ENCODE measurements at regions of chr12 and their contacts with region 1.

Region 1: GRCh38 chr12:9797722-9798619 is 29.3 kb upstream of the KLRF1 start:
- DNase-seq: peak; percentile 73
- H3K4me3 Mint-ChIP-seq: peak overlapping the region; percentile 46
- H3K27ac Mint-ChIP-seq: peak overlapping the region; percentile 41
- H3K4me1 Mint-ChIP-seq: peaks cover 49% of the 10 kb centered on the region
- H3K27me3 Mint-ChIP-seq: peaks cover 5% of the 10 kb centered on the region

Region 2: GRCh38 chr12:9340422-9341259 is 457.3 kb before region 1 on chr12:
- intact Hi-C with region 1: no loop called
- DNase-seq: no peak
- H3K4me3 Mint-ChIP-seq: no peak overlapping the region
- H3K27ac Mint-ChIP-seq: peak overlapping the region; percentile 42
- H3K4me1 Mint-ChIP-seq: peaks cover 11% of the 10 kb centered on the region
- H3K27me3 Mint-ChIP-seq: peaks cover 7% of the 10 kb centered on the region

Region 3: DNA sequence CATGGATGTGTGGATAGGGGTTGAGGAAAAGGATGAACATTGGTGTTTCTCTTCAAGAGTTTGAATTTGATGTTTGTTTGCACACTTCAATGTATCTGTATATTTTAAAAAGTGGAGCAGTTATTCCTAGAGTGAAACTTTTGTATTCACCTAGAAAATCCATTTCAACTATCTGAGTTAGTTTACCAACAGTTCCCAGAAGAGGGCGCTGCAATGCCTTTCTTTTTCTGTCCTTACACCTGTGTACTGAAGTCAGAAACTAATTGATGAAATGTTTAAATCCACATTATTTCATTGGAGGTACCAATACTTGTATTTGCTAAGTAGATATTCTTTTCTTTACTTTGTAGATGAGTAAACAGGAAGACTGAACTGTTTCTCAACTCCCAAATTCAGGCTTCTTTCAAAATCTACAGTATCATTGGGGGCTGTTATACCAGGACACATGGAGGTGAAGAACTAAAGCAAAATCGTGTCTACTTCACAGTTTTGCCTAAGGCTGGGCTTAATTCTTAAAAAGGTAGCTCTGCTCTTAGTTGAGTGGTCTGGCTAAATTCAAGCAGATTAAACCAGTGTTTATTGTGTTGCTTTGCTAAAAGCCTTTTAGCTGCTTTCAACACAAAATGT is 163.7 kb before region 1 on chr12:
- intact Hi-C with region 1: loop called (anchors 2 kb)
- DNase-seq: peak; percentile 64
- H3K4me3 Mint-ChIP-seq: peak overlapping the region; percentile 60
- H3K27ac Mint-ChIP-seq: peak overlapping the region; percentile 63
- H3K4me1 Mint-ChIP-seq: peaks cover 60% of the 10 kb centered on the region
- H3K27me3 Mint-ChIP-seq: peaks cover 3% of the 10 kb centered on the region

Region 4: GRCh38 chr12:9721394-9722092 is 76.4 kb before region 1 on chr12:
- intact Hi-C with region 1: no loop called
- DNase-seq: no peak
- H3K4me3 Mint-ChIP-seq: no peak overlapping the region
- H3K27ac Mint-ChIP-seq: no peak overlapping the region
- H3K4me1 Mint-ChIP-seq: peaks cover 61% of the 10 kb centered on the region
- H3K27me3 Mint-ChIP-seq: peaks cover 4% of the 10 kb centered on the region

Region 5: DNA sequence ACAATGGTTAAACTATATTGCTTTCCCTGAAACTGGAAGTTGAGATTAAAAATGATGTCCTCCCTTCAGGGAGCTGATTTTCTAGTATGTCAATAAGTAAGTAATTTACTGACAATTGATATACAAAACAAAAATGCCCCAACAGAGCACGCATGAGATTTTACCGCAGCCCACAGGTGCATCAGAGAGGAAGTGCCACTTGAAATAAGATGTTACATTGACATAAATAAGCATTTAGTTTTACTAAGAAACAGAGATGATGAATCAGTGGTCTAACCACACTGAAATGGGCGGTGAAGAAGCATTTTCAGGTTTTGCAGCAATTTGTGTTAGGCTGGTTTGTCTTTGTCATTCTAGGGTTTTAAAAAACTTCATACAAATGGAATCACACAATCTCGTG is 56.2 kb before region 1 on chr12:
- intact Hi-C with region 1: loop called (anchors 1 kb)
- DNase-seq: peak; percentile 81
- H3K4me3 Mint-ChIP-seq: peak overlapping the region; percentile 70
- H3K27ac Mint-ChIP-seq: peak overlapping the region; percentile 86
- H3K4me1 Mint-ChIP-seq: peaks cover 72% of the 10 kb centered on the region
- H3K27me3 Mint-ChIP-seq: no peaks in the 10 kb centered on the region

Region 6: DNA sequence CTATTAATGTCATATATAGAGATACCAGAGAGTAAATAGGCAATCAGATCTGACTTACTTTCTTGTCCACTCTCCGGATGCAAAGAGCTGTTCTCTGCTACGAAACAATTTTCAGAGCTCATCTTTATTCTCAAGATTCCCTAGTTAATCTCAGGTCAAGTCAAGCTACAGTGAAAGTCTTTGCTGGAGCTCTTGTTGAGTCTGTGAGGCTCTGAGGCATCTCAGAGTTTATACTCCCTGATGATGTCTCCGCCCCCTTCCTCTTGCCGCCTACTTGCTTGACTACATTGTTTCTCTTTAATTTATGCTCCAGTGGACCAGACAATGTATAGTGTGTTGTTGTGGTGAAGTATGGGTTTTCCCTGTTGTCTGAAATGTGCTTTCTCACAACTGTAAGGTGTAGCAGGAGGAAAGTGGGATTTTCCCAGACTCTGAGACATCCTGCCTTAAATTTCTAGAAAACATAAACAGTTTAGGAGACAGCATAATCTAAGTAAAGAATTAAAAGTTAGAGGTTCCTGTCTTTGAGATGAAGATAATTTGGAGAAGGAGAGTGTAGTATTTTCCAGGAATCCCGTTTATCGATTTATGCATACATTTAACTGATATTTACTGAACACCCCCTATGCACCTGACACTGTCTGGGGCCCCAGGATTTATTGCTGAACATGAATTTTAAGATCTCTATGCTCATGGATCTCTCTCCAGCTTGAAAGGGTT is 37.1 kb before region 1 on chr12 and contains the start of gene CD69:
- intact Hi-C with region 1: loop called (anchors 1 kb)
- DNase-seq: peak; percentile 81
- H3K4me3 Mint-ChIP-seq: peak within 1 kb of the TSS; percentile 98
- H3K27ac Mint-ChIP-seq: peak within 1 kb of the TSS; percentile 97
- H3K4me1 Mint-ChIP-seq: peaks cover 68% of the 10 kb centered on the region
- H3K27me3 Mint-ChIP-seq: peaks cover 6% of the 10 kb centered on the region
- total RNA-seq, gene CD69: 90.5 and 93.2 TPM in 2 replicates

Region 7: GRCh38 chr12:9848899-9849298 is 50.9 kb after region 1 on chr12:
- intact Hi-C with region 1: loop called (anchors 5 kb)
- DNase-seq: no peak
- H3K4me3 Mint-ChIP-seq: no peak overlapping the region
- H3K27ac Mint-ChIP-seq: no peak overlapping the region
- H3K4me1 Mint-ChIP-seq: peaks cover 10% of the 10 kb centered on the region
- H3K27me3 Mint-ChIP-seq: peaks cover 19% of the 10 kb centered on the region

Region 8: DNA sequence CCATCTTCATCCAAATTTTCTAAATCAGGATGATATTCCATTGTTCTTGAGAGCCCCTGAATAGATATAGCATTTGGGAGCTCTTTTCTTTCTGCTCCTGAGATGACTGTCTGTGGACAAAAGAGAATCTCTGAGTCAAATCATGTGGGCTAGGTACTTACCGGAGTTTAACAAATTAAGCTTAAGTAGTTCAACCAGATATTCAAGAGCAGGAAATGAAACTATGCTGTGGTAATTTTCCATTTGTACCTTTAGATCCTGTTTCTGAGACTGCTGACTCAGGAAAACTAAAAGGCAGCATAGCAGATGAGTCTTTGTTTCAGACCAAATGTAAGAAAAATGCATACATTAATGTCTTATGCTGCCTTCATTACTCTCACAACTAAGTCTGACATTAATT is 332.1 kb after region 1 on chr12 and contains the start of gene CLEC7A:
- intact Hi-C with region 1: loop called (anchors 5 kb)
- DNase-seq: no peak
- H3K4me3 Mint-ChIP-seq: no peak within 1 kb of the TSS
- H3K27ac Mint-ChIP-seq: no peak within 1 kb of the TSS
- H3K4me1 Mint-ChIP-seq: peaks cover 16% of the 10 kb centered on the region
- H3K27me3 Mint-ChIP-seq: peaks cover 37% of the 10 kb centered on the region
- total RNA-seq, gene CLEC7A: 0.17 TPM in 1 of 2 replicates, not detected in the other

Region 9: DNA sequence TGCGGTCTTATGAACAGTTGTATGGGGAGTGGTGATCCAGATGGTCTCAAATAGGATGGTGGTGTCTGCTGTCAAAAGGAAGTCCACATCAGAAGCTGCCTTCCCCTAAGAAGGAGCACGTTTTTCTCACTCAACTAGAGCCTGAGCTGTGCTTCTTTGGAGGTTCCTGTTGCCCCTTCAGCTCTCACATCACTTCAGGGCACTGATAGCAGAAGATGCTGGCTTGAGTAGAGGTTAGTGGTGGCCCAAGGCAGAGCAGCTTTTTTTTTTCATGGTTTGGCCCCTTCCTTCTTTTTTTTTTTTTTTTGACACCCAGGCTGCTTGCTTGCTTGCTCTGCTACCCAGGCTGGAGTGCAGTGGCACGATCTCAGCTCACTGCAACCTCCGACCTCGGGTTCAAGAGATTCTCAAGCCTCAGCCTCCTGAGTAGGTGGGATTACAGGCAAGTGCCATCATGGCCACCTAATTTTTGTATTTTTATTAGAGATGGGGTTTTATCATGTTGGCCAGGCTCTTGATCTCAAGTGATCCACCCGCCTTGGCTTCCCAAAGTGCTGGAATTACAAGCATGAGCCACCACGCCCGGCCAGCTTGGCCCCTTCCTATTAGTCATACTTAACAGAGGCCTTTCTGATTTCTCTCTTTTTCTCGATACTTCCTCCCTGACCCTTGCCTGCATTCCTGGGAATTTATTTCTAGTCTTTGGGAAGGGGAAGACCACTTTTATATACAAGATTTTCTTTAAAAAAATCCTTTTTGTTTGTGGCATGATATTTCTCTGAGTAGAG is 541.3 kb after region 1 on chr12:
- intact Hi-C with region 1: no loop called
- DNase-seq: no peak
- H3K4me3 Mint-ChIP-seq: no peak overlapping the region
- H3K27ac Mint-ChIP-seq: no peak overlapping the region
- H3K4me1 Mint-ChIP-seq: no peaks in the 10 kb centered on the region
- H3K27me3 Mint-ChIP-seq: peaks cover 16% of the 10 kb centered on the region

Measured in activated T-helper 1 cell treated with anti-CD3 and anti-CD28 coated beads, Interleukin-12 subunit alpha, Interleukin-12 subunit beta, Interleukin-2, Interleukin-4 antibody, amounts not matched to agents 30 ng/mL and 10 ng/mL and 1 ng/mL, durations not matched to agents 14 hours and 24 hours and 36 hours (primary cell).